Ascending aorta (tissue), 2 donors: ENCODE measurements at regions of chr5 and their contacts with region 1.

Region 1: DNA sequence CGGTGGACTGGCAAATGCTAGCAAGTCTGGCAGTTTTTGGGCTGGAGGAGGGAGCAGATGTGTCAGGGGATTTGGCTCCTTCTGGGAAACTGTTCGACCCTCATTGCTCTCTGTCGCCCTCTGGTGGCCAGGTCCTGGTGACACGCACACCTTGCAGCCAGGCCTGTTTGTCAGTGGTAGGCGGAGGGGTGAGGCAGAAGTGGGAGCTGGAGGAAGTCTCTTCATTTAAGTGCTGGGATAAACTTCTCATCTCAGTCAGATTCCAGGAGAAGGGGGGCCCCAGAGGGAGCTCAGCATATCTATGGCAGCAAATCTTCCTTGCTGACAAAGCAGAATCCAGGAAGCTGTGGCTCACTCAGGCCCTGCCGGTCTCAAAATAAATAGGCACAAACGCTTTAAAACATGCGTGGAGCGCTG is 326.5 kb downstream of the ZSWIM6 start:
- DNase-seq: peak; percentile 23 to 80
- H3K4me3 ChIP-seq: no peak overlapping the region
- H3K27ac ChIP-seq: no peak overlapping the region
- H3K4me1 ChIP-seq: no peaks in the 10 kb centered on the region
- H3K27me3 ChIP-seq: no peaks in the 10 kb centered on the region
- CTCF ChIP-seq: peak; percentile 77 to 92 (median 91)

Region 2: DNA sequence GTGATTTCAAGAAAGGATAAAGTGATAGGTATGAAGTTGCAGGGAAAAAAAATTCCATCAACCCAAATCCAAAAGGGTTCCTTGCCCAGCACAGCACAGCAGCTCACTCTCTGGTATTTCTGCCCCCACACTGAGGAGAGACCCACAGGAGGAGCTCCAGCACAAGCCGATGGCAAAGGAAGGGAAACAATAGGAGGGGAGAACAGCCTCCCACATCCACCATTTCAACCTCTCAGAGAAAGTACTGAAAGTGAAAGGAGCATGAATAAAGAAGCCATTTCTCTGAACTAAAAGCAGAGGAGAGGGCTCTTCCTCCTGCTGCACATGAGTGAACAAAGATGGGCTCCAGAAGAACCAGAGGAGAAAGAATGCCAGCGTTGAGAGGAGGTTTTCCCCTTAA is 381.4 kb before region 1 on chr5:
- intact Hi-C with region 1: loop called (anchors 1 kb)
- DNase-seq: no peak
- H3K4me3 ChIP-seq: peak overlapping the region in 1 of 2 donors; percentile 23
- H3K27ac ChIP-seq: peak overlapping the region in 1 of 2 donors; percentile 38
- H3K4me1 ChIP-seq: no peaks in the 10 kb centered on the region
- H3K27me3 ChIP-seq: no peaks in the 10 kb centered on the region
- CTCF ChIP-seq: peak in 1 of 3 experiments; percentile 52